ENCODE measurements at regions of chr12 and their contacts with region 1.

Region 1: GRCh38 chr12:39852346-39852745 is 232.7 kb upstream of the ABCD2 start:
- DNase-seq: no peak
- H3K4me3 ChIP-seq: no peak overlapping the region
- H3K27ac ChIP-seq: no peak overlapping the region
- H3K4me1 ChIP-seq: no peaks in the 10 kb centered on the region
- H3K27me3 ChIP-seq: no peaks in the 10 kb centered on the region
- CTCF ChIP-seq: no peak

Region 2: DNA sequence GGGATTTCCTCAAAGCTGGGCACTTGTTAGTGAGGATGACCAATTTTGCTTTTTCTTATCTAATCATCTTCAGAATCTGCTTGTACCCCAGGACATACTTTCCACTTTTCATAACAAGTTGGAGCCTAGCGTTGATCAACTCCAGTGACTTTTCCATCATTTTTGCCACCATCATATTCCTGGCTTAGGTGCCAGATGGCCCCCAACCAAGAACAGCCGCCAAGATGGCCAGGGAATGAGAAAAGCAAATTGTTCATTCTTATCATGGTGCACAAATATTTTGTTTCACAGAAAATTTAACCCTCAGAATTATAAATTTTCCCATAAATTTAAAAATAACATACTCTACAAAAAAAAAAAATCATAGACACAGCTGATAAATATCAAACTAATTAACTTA is 216.1 kb after region 1 on chr12:
- CTCF ChIA-PET with region 1: no interaction called
- POLR2A ChIA-PET with region 1: no interaction called
- intact Hi-C with region 1: no loop called
- DNase-seq: no peak
- H3K4me3 ChIP-seq: no peak overlapping the region
- H3K27ac ChIP-seq: no peak overlapping the region
- H3K4me1 ChIP-seq: no peaks in the 10 kb centered on the region
- H3K27me3 ChIP-seq: no peaks in the 10 kb centered on the region
- CTCF ChIP-seq: no peak

Region 3: DNA sequence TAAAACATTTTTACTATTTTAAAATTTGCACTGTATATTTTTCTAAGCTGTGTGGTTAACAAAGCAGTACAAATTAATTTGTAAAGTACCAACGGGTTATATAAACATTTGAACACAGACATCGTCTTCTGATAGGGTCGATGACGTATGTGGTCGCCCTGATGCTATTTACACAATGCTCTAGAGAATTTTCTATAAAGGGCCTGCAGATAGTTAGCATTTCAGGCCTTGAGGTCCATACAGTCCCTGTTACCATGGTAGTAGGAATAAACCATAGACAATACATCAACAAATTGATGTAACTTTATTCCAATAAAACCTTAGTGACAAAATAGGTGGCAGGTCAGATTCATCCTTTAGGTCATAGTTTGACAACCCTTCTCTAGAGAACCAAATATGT is 1310.1 kb after region 1 on chr12:
- CTCF ChIA-PET with region 1: no interaction called
- POLR2A ChIA-PET with region 1: interaction called, 10 read pairs
- intact Hi-C with region 1: no loop called
- DNase-seq: no peak
- H3K4me3 ChIP-seq: no peak overlapping the region
- H3K27ac ChIP-seq: no peak overlapping the region
- H3K4me1 ChIP-seq: no peaks in the 10 kb centered on the region
- H3K27me3 ChIP-seq: no peaks in the 10 kb centered on the region
- CTCF ChIP-seq: no peak